ENCODE measurements at regions of chr5 and their contacts with region 1.

Region 1: DNA sequence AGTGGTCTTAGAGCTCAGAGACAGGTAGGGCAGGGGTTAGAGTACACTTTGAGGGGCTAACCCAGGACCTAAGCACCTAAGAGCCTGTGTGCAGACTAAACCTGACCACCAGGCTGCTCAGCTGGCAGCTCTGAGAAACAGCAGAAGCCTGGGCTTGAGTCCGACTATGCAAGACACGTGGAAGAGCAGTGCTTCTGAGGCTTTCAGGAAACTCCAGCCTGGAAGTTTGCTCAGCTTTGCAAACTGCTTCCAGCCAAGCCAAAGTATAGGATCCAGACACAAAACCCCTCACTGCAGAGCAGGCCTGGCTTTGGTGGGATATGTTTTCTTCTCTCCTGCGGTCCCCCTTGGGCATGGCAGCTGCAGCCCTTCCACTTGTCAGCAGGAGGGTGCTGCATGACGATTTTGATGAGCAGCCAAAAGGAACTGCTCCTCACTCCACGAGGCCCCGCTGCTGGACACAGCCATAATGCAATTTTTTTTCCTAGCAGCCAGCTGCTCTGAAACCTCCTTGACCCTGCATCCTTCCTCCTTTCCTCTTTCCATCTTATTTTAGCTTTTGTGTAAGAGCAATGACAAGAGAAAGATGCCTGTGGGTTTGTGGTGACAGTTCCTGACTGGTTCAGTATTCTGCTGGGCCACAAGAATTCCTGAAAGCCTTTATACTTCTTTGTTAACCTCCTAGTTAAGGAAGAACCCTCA is 123.1 kb downstream of the LIFR start:
- DNase-seq: peak; percentile 51 to 57 (median 55)
- H3K4me3 ChIP-seq: no peak overlapping the region
- H3K27ac ChIP-seq: peak overlapping the region in 1 of 2 donors; percentile 26
- H3K4me1 ChIP-seq: peaks cover 4% of the 10 kb centered on the region
- H3K27me3 ChIP-seq: no peaks in the 10 kb centered on the region
- CTCF ChIP-seq: no peak
- EP300 ChIP-seq: no peak
- POLR2A ChIP-seq: no peak

Region 2: DNA sequence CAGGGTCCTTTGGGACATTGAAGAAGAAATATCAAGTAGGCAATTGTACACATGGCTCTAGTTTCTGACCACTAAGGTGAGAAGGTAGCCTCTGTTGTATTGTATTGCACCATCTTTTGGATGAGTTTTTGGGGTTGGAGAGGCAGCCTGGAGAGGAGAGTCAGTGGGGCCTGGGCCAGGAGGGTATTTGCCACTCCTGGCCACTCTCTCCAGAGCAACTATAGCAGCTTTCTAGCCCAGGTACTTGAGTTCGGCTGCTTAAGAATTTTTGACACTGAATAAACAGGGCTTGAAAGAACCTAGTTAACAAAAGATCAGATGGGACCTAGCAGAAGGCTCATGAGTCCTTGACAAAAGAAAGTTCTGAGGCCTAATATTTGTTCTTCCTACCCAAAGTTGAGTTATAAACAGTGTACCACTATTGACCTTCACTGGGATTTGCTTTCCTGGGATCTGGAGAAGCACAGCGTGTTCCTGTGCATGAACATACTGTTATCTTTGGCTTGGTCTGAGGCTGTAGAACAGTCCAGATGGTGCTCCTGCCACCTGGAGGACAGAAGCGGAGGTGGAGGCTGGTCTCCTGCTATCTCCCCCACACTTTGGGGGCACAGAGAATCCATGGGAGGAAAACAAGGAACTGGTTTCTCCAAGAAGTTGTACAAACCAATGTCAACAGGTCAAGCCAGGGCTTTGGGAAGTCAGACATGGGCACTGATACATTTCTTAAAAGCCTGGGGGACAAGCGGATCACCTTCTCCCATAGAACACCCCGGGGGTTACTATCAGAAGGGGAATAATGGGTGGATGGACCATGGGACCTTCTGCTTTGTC is 233.6 kb after region 1 on chr5:
- intact Hi-C with region 1: loop called in 1 of 4 experiments (anchors 10 kb)
- DNase-seq: peak; percentile 23 to 71 (median 34)
- H3K4me3 ChIP-seq: no peak overlapping the region
- H3K27ac ChIP-seq: no peak overlapping the region
- H3K4me1 ChIP-seq: peaks cover 5% of the 10 kb centered on the region
- H3K27me3 ChIP-seq: no peaks in the 10 kb centered on the region
- CTCF ChIP-seq: peak in 1 of 3 donors; percentile 20
- EP300 ChIP-seq: no peak
- POLR2A ChIP-seq: no peak

Measured in ovary (tissue), 10 donors.